ENCODE measurements at regions of chr2 and their contacts with region 1.

Region 1: GRCh38 chr2:225920621-225921220 is 521.2 kb downstream of the NYAP2 start:
- DNase-seq: no peak
- ATAC-seq: no peak
- H3K4me3 ChIP-seq: no peak overlapping the region
- H3K27ac ChIP-seq: no peak overlapping the region
- H3K4me1 ChIP-seq: peaks cover 0 to 3% of the 10 kb centered on the region in 2 donors
- H3K27me3 ChIP-seq: no peaks in the 10 kb centered on the region

Region 2: GRCh38 chr2:226583715-226584114 is 663.0 kb after region 1 on chr2:
- intact Hi-C with region 1: loop called in 1 of 2 experiments (anchors 10 kb)
- DNase-seq: no peak
- ATAC-seq: peak; percentile 50
- H3K4me3 ChIP-seq: no peak overlapping the region
- H3K27ac ChIP-seq: peak overlapping the region in 1 of 2 donors; percentile 14
- H3K4me1 ChIP-seq: peaks cover 0 to 3% of the 10 kb centered on the region in 2 donors
- H3K27me3 ChIP-seq: no peaks in the 10 kb centered on the region

Measured in aorta (tissue), 5 donors.